Left ventricle myocardium superior (tissue), 1 donor: ENCODE measurements at regions of chr2 and their contacts with region 1.

Region 1: GRCh38 chr2:89818873-89819272 is 1127.4 kb downstream of the RPIA start:
- DNase-seq: no peak
- ATAC-seq: no peak

Region 2: GRCh38 chr2:89763254-89763580 is 55.7 kb before region 1 on chr2:
- intact Hi-C with region 1: no loop called
- DNase-seq: peak; percentile 28
- ATAC-seq: no peak

Region 3: GRCh38 chr2:89775885-89776682 is 42.8 kb before region 1 on chr2:
- intact Hi-C with region 1: loop called (anchors 5 kb)
- DNase-seq: no peak
- ATAC-seq: no peak